Endothelial cell of umbilical vein (primary cell): ENCODE measurements at regions of chr2 and their contacts with region 1.

Region 1: DNA sequence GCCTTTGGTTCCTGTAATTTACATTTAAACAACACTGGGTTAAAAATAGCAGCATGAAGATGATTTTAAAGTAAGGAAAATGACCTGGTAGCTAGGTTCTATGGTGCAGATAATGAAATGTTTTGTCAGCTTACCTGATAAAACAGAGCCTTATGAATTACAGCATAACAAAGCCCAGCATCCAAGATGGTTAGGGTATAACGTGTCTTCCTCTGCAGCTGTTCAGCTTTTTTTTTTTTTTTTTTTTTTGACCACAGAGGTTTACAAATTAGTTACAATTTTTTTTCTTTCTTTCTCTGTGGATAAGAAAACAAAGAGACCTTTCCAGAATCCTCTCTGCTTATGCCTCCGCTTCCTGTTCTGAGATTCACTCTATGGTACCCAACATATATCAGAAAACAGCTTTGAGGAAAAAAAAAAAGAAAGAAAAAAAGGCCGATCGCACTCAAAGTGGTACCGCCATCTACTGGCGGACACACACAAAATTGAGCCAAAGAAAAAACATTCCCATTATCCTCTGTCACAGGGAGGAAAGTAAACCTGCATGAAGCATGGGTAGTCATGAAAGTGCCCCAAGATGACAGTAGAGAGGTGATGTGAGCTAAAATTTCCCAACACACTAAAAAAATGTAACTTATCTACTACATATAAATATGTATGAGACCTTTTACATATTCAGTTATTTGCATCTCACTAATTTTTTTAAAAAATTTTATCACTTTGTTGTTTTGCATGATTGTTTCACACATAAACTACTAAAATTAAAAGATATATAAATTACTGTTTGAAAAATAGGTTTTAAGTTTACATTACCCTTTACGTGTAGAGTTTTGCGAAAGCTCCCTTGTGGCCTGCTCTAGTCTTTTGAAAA is at the start of gene SCN3A:
- DNase-seq: peak; percentile 55
- H3K4me3 ChIP-seq: no peak within 1 kb of the TSS
- H3K27ac ChIP-seq: no peak within 1 kb of the TSS
- H3K4me1 ChIP-seq: no peaks in the 10 kb centered on the region
- H3K27me3 ChIP-seq: peaks cover 0 to 1% of the 10 kb centered on the region in 2 experiments
- CTCF ChIP-seq: peak; percentile 65 to 69
- POLR2A ChIP-seq: no peak
- total RNA-seq, gene SCN3A: not detected in 2 replicates

Region 2: GRCh38 chr2:164697674-164698461 is 506.1 kb before region 1 on chr2:
- CTCF ChIA-PET with region 1: no interaction called
- POLR2A ChIA-PET with region 1: no interaction called
- dilution Hi-C with region 1: no loop called
- intact Hi-C with region 1: no loop called
- DNase-seq: peak; percentile 51
- H3K4me3 ChIP-seq: no peak overlapping the region
- H3K27ac ChIP-seq: no peak overlapping the region
- H3K4me1 ChIP-seq: peaks cover 4% of the 10 kb centered on the region
- H3K27me3 ChIP-seq: no peaks in the 10 kb centered on the region
- CTCF ChIP-seq: peak; percentile 16 to 42
- POLR2A ChIP-seq: no peak

Region 3: GRCh38 chr2:164992818-164993217 is 211.1 kb before region 1 on chr2:
- CTCF ChIA-PET with region 1: interaction called, 186 read pairs
- POLR2A ChIA-PET with region 1: no interaction called
- dilution Hi-C with region 1: no loop called
- intact Hi-C with region 1: loop called (anchors 1 kb)
- DNase-seq: peak; percentile 71
- H3K4me3 ChIP-seq: no peak overlapping the region
- H3K27ac ChIP-seq: no peak overlapping the region
- H3K4me1 ChIP-seq: no peaks in the 10 kb centered on the region
- H3K27me3 ChIP-seq: no peaks in the 10 kb centered on the region
- CTCF ChIP-seq: peak; percentile 19 to 22
- POLR2A ChIP-seq: no peak

Region 4: DNA sequence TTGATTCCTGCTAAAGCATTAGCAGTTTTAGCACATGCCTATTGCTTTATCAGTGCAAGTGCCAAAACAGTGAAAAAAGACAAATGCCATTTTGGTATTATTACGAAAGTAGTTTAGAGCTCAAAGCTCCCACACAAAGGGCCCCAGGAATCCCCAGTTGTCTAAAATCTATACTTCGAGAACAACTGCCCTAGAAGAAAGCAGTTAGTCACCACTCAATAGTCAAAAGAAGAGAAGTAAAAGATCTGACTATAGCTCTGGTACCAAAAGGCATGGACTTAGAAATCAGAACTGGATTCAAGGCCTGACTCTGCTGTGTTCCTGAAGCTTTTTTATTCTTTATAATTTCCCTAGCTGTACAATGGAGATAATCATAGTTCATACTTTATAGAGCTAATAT is 21.9 kb before region 1 on chr2:
- CTCF ChIA-PET with region 1: interaction called, 24 read pairs
- POLR2A ChIA-PET with region 1: no interaction called
- dilution Hi-C with region 1: no loop called
- intact Hi-C with region 1: no loop called
- DNase-seq: no peak
- H3K4me3 ChIP-seq: no peak overlapping the region
- H3K27ac ChIP-seq: no peak overlapping the region
- H3K4me1 ChIP-seq: no peaks in the 10 kb centered on the region
- H3K27me3 ChIP-seq: peaks cover 0 to 3% of the 10 kb centered on the region in 2 experiments
- CTCF ChIP-seq: no peak
- POLR2A ChIP-seq: no peak

Region 5: GRCh38 chr2:165214093-165214492 is 10.2 kb after region 1 on chr2:
- CTCF ChIA-PET with region 1: interaction called, 20 read pairs
- POLR2A ChIA-PET with region 1: no interaction called
- dilution Hi-C with region 1: no loop called
- intact Hi-C with region 1: no loop called
- DNase-seq: no peak
- H3K4me3 ChIP-seq: no peak overlapping the region
- H3K27ac ChIP-seq: no peak overlapping the region
- H3K4me1 ChIP-seq: no peaks in the 10 kb centered on the region
- H3K27me3 ChIP-seq: no peaks in the 10 kb centered on the region
- CTCF ChIP-seq: no peak
- POLR2A ChIP-seq: no peak

Region 6: DNA sequence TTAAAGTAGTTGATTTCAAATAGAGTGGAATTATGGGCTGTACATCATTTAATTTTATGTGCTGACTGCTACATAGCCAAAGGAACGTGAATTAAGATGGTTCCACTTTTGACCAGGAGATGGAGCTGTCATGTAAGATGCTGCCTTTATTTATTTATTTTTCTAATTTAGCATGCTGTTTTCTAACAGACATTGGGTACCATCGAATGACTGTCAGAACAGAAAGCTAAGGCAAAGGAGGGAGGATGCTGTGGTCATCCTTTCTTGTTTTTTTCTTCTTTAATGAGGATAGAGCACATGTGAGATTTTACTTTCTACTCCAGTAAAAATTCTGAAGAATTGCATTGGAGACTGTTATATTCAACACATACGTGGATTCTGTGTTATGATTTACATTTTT is 35.3 kb after region 1 on chr2 and contains the start of gene SCN2A:
- CTCF ChIA-PET with region 1: interaction called, 10 read pairs
- POLR2A ChIA-PET with region 1: no interaction called
- dilution Hi-C with region 1: no loop called
- intact Hi-C with region 1: no loop called
- DNase-seq: peak; percentile 60
- H3K4me3 ChIP-seq: no peak within 1 kb of the TSS
- H3K27ac ChIP-seq: no peak within 1 kb of the TSS
- H3K4me1 ChIP-seq: no peaks in the 10 kb centered on the region
- H3K27me3 ChIP-seq: no peaks in the 10 kb centered on the region
- CTCF ChIP-seq: peak; percentile 32 to 45
- POLR2A ChIP-seq: no peak
- total RNA-seq, gene SCN2A: not detected in 2 replicates